GM12878 (cell line): ENCODE measurements at regions of chr4 and their contacts with region 1.

Region 1: DNA sequence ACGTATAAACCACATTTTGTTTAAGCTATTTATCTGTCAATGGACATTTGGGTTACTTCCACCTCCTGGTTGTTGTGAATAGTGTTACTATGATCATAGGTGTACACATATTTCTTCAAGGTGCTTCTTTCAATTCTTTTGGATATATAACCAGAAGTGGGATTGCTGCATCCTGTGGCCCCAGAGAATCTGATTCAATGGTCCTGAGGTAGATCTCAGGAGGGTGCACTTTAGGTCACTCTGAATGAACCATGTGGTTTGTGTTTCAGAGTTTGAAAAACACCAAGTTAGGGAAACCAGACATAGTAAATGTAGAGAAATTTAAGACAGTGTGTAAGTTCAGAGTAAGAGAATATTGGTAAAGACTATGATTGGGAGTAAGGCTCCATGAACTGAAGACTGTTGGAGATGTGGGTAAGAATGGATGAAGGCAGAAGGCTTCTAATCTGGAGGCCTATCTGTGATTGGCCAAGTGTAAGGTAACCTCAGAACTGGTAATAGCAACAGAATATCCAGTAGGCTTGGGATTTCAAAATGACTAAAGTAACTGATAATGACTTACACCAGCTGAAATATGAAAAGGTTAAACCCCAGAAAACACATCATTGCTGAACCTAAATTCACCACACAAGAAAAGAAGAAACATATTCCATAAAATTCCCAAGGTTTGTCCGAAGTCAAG is 236.9 kb downstream of the CAMK2D start:
- DNase-seq: no peak
- ATAC-seq: peak; percentile 72
- H3K4me3 ChIP-seq: no peak overlapping the region
- H3K27ac ChIP-seq: peak overlapping the region; percentile 38; the same call in 1 of the 2 replicates
- H3K4me1 ChIP-seq: peaks cover 12% of the 10 kb centered on the region
- H3K27me3 ChIP-seq: no peaks in the 10 kb centered on the region
- CTCF ChIP-seq: no peak
- EP300 ChIP-seq: no peak
- POLR2A ChIP-seq: no peak
- RAD21 ChIP-seq: no peak

Region 2: DNA sequence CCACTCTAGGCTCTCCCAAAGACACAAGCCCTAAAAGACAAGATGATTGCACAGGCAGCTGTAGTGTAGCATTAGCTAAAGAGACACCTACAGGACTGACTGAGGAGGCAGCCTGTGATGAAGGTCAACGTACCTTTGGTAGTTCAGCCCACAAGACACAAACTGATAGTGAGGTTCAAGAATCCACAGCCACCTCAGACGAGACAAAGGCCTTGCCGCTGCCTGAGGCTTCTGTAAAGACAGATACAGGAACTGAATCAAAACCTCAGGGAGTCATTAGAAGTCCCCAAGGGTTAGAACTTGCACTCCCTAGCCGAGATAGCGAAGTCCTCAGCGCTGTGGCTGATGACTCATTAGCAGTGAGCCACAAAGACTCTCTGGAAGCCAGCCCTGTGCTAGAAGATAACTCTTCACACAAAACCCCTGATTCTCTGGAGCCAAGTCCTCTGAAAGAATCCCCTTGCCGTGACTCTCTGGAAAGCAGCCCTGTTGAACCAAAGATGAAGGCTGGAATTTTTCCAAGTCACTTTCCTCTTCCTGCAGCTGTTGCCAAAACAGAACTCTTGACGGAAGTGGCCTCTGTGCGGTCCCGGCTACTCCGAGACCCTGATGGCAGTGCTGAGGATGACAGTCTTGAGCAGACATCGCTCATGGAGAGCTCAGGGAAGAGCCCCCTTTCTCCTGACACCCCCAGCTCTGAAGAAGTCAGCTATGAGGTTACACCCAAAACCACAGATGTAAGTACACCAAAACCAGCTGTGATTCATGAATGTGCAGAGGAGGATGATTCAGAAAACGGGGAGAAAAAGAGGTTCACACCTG is 168.9 kb before region 1 on chr4:
- CTCF ChIA-PET with region 1: no interaction called
- POLR2A ChIA-PET with region 1: no interaction called
- RAD21 ChIA-PET with region 1: no interaction called
- SMC1A ChIA-PET with region 1: no interaction called
- in situ Hi-C with region 1: no loop called
- intact Hi-C with region 1: no loop called
- DNase-seq: peak; percentile 98
- ATAC-seq: peak; percentile 98
- H3K4me3 ChIP-seq: peak overlapping the region; percentile 8; the same call in 1 of the 2 replicates
- H3K27ac ChIP-seq: peak overlapping the region; percentile 64
- H3K4me1 ChIP-seq: peaks cover 14% of the 10 kb centered on the region
- H3K27me3 ChIP-seq: no peaks in the 10 kb centered on the region
- CTCF ChIP-seq: peak; percentile 43 to 65 (median 45); a peak in 5 of 6 replicates
- EP300 ChIP-seq: peak; percentile 70 to 79
- POLR2A ChIP-seq: no peak
- RAD21 ChIP-seq: peak; percentile 36; the same call in 1 of the 2 replicates

Region 3: DNA sequence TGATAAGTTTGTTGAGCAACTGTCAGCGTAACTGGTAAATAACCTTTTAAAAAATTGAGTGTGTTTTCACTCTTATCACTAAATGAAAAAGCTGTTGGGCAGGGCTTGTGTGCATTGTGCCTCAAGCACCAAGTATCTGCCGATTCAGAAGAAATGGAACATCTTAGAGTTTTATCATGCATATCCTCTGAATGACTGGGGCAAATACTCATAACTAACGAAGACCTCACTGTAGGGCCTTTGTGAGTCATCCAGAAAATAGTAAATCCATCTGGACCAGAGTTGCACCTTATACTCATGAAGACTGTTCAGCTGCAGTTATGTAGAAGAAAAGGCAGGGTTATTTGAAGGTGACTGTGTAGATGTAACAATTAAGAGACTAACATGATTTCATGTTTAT is 14.8 kb after region 1 on chr4:
- CTCF ChIA-PET with region 1: interaction called, 3 read pairs
- POLR2A ChIA-PET with region 1: interaction called, 3 read pairs
- RAD21 ChIA-PET with region 1: interaction called, 5 read pairs
- SMC1A ChIA-PET with region 1: interaction called, 10 read pairs
- in situ Hi-C with region 1: no loop called
- intact Hi-C with region 1: no loop called
- DNase-seq: no peak
- ATAC-seq: peak; percentile 92
- H3K4me3 ChIP-seq: no peak overlapping the region
- H3K27ac ChIP-seq: no peak overlapping the region
- H3K4me1 ChIP-seq: no peaks in the 10 kb centered on the region
- H3K27me3 ChIP-seq: no peaks in the 10 kb centered on the region
- CTCF ChIP-seq: no peak
- EP300 ChIP-seq: no peak
- POLR2A ChIP-seq: no peak
- RAD21 ChIP-seq: no peak